ENCODE measurements at regions of chr1 and their contacts with region 1.

Region 1: GRCh38 chr1:231337472-231338269 is at the start of gene EXOC8:
- DNase-seq: peak; percentile 95 to 98
- ATAC-seq: peak; percentile 95 to 98 (median 96)
- H3K4me3 ChIP-seq: peak within 1 kb of the TSS; percentile 74 to 95 (median 82)
- H3K27ac ChIP-seq: peak within 1 kb of the TSS; percentile 85 to 98 (median 92)
- H3K4me1 ChIP-seq: peaks cover 18 to 66% (median 55%) of the 10 kb centered on the region in 9 donors
- H3K27me3 ChIP-seq: no peaks in the 10 kb centered on the region
- CTCF ChIP-seq: peak in 1 of 9 donors; percentile 7
- total RNA-seq, gene EXOC8: 10.3 to 16.7 (median 12.8) TPM

Region 2: GRCh38 chr1:231045286-231045685 is 292.4 kb before region 1 on chr1:
- intact Hi-C with region 1: no loop called
- DNase-seq: no peak
- ATAC-seq: no peak
- H3K4me3 ChIP-seq: no peak overlapping the region
- H3K27ac ChIP-seq: no peak overlapping the region
- H3K4me1 ChIP-seq: peaks cover 0 to 9% (median 6%) of the 10 kb centered on the region in 9 donors
- H3K27me3 ChIP-seq: peaks cover 0 to 25% (median 0%) of the 10 kb centered on the region in 7 donors
- CTCF ChIP-seq: no peak

Region 3: GRCh38 chr1:231278100-231278790 is 59.4 kb before region 1 on chr1:
- intact Hi-C with region 1: loop called in 1 of 10 experiments (anchors 5 kb)
- DNase-seq: peak; percentile 39 to 66
- ATAC-seq: peak; percentile 67 to 98 (median 92)
- H3K4me3 ChIP-seq: no peak overlapping the region
- H3K27ac ChIP-seq: peak overlapping the region in 9 of 10 donors; percentile 49 to 83 (median 68)
- H3K4me1 ChIP-seq: peaks cover 0 to 8% (median 0%) of the 10 kb centered on the region in 9 donors
- H3K27me3 ChIP-seq: no peaks in the 10 kb centered on the region
- CTCF ChIP-seq: no peak